A673 (cell line): ENCODE measurements at regions of chr4 and their contacts with region 1.

Region 1: GRCh38 chr4:173420324-173420752 is 21.4 kb upstream of the SCRG1 start:
- DNase-seq: peak; percentile 61
- H3K4me3 ChIP-seq: no peak overlapping the region
- H3K27ac ChIP-seq: no peak overlapping the region
- H3K4me1 ChIP-seq: peaks cover 18% of the 10 kb centered on the region
- H3K27me3 ChIP-seq: no peaks in the 10 kb centered on the region
- CTCF ChIP-seq: peak; percentile 68

Region 2: DNA sequence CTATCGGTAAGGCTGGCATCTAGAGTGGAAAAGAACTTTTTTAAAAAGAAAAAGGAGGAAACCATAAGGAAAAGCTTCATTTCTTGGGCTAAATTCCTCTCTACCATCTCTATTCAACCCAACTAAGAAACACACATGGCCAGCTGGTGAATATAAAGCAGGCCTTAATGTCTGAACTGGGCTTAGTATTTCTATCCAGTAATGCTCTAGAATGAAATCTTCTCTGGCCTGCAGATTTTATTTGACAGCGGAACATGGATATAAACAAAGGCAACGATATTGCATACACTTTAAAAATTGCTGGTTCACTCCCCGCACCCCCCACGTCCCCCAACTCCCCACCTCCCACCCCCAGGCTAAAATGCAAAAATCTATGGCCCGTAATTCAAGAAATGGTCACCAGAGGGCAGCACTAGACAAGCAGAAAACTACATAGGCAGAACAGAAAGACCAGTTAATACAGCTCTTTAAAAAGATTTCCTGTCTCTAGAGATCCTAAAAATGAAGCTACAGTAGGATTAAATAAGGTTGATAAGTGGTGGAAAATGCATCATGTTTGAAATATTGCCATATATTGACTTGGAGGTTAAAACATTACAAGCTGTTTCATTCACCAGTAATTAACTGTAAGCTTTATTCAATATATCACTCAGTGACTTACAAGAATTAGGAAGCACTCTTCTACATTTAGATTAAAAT is 407.0 kb before region 1 on chr4:
- CTCF ChIA-PET with region 1: interaction called, 6 read pairs
- POLR2A ChIA-PET with region 1: no interaction called
- intact Hi-C with region 1: loop called (anchors 1 kb)
- DNase-seq: peak; percentile 82
- H3K4me3 ChIP-seq: no peak overlapping the region
- H3K27ac ChIP-seq: peak overlapping the region; percentile 68
- H3K4me1 ChIP-seq: peaks cover 40% of the 10 kb centered on the region
- H3K27me3 ChIP-seq: no peaks in the 10 kb centered on the region
- CTCF ChIP-seq: peak; percentile 75

Region 3: DNA sequence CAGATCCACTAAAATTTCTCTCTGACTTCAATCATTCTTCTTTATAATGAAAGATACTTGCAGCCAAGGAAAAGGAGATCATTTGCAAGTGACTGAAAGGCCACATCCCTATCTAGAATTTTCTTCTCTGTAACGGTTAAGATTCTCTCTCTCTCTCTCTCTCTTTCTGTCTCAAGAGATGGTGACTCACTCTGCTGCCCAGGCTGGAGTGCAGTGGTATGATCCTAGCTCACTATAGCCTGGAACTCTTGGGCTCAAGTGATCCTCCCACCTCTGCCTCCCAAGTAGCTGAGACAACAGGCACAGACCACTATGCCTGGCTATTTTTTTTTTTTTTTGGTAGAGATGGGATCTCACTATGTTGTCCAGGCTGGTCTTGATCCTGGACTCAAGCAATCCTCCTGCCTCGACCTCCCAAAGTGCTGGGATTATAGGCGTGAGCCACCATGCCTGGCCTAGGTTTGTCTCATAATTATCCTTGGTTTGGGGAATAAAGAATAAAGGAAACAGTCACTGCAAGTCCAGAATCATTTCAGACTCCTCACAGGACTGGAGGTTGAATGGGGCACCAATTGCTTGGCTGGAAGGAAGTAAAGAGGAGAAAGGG is 285.0 kb before region 1 on chr4:
- CTCF ChIA-PET with region 1: no interaction called
- POLR2A ChIA-PET with region 1: no interaction called
- intact Hi-C with region 1: no loop called
- DNase-seq: no peak
- H3K4me3 ChIP-seq: no peak overlapping the region
- H3K27ac ChIP-seq: no peak overlapping the region
- H3K4me1 ChIP-seq: no peaks in the 10 kb centered on the region
- H3K27me3 ChIP-seq: no peaks in the 10 kb centered on the region
- CTCF ChIP-seq: no peak

Region 4: DNA sequence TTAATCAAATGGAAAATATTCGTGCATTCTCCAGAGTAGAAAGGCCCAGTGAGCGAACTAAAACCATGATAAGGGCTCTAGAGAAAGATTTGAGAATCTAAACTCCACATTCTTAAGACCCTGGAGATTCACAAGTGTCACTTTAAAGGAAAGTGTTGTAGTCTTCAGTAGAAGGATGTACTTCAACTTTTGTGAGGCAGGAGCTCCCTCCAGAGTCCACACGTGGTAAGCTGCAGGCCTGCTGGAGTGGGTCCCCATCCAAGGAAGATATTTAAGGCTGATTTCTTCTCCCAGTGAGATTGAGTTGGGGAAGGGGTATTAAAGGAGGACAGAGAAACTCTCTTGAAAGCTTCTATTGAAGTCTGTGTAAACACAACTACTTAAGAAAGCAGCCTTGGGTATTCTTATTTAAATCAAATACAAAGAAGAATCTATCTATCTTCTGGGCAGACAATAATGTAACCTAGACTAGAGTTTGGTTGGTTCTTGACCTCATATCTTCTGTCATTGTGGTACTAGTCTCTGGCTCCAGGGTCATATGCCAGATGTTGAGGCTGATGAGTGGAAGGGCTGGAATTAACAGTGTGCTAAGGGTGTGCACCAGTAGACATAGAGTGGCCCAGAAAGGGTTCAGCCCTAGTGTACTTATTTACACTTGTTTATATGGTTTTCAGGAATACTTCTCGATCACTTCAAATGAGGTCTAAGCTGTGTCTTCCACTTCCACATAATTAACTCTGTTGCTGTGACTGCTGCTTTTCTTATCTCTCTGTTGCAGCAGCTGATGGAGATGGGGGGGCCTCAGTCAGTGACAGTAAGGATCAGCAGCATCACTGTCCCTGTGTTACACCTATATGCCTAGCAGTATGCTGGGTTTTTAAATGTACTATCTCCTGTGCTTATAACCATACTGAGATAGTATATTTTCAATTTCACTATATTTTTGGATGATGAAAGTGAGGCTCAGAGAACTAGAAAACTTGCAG is 162.3 kb before region 1 on chr4:
- CTCF ChIA-PET with region 1: no interaction called
- POLR2A ChIA-PET with region 1: no interaction called
- intact Hi-C with region 1: loop called (anchors 2 kb)
- DNase-seq: peak; percentile 86
- H3K4me3 ChIP-seq: no peak overlapping the region
- H3K27ac ChIP-seq: peak overlapping the region; percentile 37
- H3K4me1 ChIP-seq: peaks cover 62% of the 10 kb centered on the region
- H3K27me3 ChIP-seq: no peaks in the 10 kb centered on the region
- CTCF ChIP-seq: peak; percentile 94

Region 5: DNA sequence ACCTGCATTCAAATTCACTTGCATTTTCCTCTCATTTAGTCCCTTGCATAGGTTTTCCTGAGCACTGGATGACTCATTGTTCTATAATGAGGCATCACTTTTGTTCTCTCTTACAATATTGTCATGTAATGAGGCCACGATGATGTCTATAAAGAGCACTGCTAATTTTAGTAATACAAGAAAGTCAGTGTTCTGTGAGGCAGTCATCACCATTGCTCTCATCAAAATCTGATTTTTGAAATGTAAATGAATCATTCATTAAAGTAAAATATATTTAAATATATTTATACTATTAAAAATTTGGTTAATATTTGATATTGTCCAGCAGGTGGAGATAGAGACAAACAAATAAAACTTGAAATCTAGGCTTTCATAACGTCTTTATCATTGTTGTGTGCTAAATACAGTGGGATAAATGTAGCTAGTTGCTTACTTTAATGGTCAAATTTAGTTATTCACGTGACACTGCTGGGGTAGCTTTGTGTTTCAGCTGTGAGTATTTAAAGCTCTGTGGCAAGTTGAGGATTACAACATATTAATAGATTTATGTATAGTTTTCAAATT is 101.6 kb before region 1 on chr4:
- CTCF ChIA-PET with region 1: interaction called, 22 read pairs
- POLR2A ChIA-PET with region 1: interaction called, 3 read pairs
- intact Hi-C with region 1: loop called (anchors 1 kb)
- DNase-seq: peak; percentile 71
- H3K4me3 ChIP-seq: no peak overlapping the region
- H3K27ac ChIP-seq: no peak overlapping the region
- H3K4me1 ChIP-seq: peaks cover 20% of the 10 kb centered on the region
- H3K27me3 ChIP-seq: no peaks in the 10 kb centered on the region
- CTCF ChIP-seq: peak; percentile 54; the same call in 1 of the 2 replicates

Region 6: GRCh38 chr4:173494013-173494970 is 74.0 kb after region 1 on chr4:
- CTCF ChIA-PET with region 1: interaction called, 18 read pairs
- POLR2A ChIA-PET with region 1: no interaction called
- intact Hi-C with region 1: loop called (anchors 1 kb)
- DNase-seq: peak; percentile 85
- H3K4me3 ChIP-seq: peak overlapping the region; percentile 40
- H3K27ac ChIP-seq: no peak overlapping the region
- H3K4me1 ChIP-seq: peaks cover 39% of the 10 kb centered on the region
- H3K27me3 ChIP-seq: no peaks in the 10 kb centered on the region
- CTCF ChIP-seq: peak; percentile 87

Region 7: DNA sequence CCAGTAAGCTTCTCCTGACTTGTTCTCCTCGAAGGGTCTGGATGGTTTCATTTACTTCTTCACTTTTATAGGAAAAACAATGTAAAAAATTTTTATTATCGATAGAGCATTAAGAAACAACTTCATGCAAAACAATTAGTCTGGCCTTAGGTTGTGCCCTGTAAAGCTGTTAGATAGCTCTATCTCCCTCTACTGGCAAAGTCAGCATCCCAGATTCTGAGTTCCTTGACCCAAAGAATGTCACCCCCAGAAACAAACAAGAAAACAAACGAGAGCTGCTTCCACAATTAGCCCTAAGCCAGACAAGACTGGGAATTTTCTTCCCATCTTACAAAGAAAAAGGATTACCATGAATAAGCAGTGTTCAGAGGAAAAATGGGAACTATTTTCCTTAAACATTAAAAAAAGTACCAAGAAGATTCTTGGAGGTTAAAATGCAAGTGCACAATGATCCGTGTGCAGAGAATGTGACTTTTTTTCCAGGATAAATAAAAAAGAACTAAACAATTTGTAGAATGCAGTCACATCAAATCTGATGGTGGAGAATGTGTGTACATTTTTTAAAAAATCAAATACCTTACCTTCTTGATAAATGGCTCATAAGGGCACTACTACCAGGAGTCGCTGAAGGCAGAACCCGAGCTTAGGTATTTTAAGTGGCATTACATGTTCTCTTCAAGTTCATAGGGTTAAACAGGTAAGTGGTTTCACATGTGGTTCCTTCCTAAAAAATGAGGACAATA is 570.0 kb after region 1 on chr4:
- CTCF ChIA-PET with region 1: no interaction called
- POLR2A ChIA-PET with region 1: no interaction called
- intact Hi-C with region 1: loop called (anchors 10 kb)
- DNase-seq: peak; percentile 79
- H3K4me3 ChIP-seq: no peak overlapping the region
- H3K27ac ChIP-seq: peak overlapping the region; percentile 65
- H3K4me1 ChIP-seq: peaks cover 31% of the 10 kb centered on the region
- H3K27me3 ChIP-seq: no peaks in the 10 kb centered on the region
- CTCF ChIP-seq: peak; percentile 83

Region 8: DNA sequence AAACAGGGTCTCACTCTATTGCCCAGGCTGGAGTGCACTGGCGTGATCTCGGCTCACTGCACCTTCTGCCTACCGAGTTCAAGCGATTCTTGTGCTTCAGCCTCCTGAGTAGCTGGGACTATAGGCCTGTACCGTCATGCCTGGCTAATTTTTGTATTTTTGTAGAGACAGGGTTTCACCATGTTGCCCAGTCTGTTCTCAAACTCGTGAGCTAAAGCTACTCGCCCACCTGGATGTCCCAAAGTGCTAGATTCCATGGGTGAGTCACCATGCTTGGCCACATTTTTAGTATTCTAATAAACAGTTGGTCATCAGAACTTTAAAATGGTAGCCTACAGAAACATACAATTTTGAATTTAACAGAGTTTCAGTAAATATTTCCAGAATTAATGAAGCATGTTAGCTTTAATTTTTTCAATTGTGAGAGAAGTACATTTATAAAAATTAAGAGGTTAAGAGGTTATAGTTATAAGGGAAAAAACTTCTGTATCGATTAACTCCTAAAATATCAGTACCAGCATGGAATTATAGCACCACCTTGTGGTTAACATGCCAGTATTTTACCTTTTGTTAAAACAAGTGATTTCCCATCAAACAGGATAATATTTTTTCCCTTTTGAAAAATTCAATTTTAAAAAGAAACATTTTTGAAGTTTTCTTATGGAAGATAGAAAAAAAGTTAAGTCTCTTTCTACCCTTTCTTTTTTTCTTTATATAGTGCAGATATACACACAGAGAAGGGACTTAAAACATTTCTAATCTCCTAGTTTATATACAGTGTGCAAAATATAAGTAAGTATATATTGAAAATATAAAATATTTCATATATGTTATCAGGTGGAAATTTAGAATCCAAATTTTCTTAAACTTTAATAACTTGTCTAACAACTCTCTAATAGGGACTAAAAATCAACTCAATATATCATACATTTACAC is 898.8 kb after region 1 on chr4:
- CTCF ChIA-PET with region 1: interaction called, 6 read pairs
- POLR2A ChIA-PET with region 1: no interaction called
- intact Hi-C with region 1: loop called (anchors 2 kb)
- DNase-seq: peak; percentile 55
- H3K4me3 ChIP-seq: no peak overlapping the region
- H3K27ac ChIP-seq: no peak overlapping the region
- H3K4me1 ChIP-seq: peaks cover 35% of the 10 kb centered on the region
- H3K27me3 ChIP-seq: no peaks in the 10 kb centered on the region
- CTCF ChIP-seq: peak; percentile 83